ENCODE measurements at regions of chr21 and their contacts with region 1.

Region 1: GRCh38 chr21:32826329-32827167 is 55.0 kb upstream of the PAXBP1 start:
- DNase-seq: peak in 1 of 2 donors; percentile 85
- H3K4me3 ChIP-seq: no peak overlapping the region
- H3K27ac ChIP-seq: no peak overlapping the region
- H3K4me1 ChIP-seq: no peaks in the 10 kb centered on the region
- H3K27me3 ChIP-seq: peaks cover 0 to 3% (median 0%) of the 10 kb centered on the region in 3 donors
- CTCF ChIP-seq: peak in 5 of 7 experiments; percentile 33 to 54 (median 48)
- EP300 ChIP-seq: no peak
- POLR2A ChIP-seq: no peak

Region 2: GRCh38 chr21:32403201-32403777 is 423.3 kb before region 1 on chr21:
- intact Hi-C with region 1: no loop called
- DNase-seq: peak; percentile 57 to 87
- H3K4me3 ChIP-seq: no peak overlapping the region
- H3K27ac ChIP-seq: no peak overlapping the region
- H3K4me1 ChIP-seq: peaks cover 0 to 7% (median 0%) of the 10 kb centered on the region in 4 donors
- H3K27me3 ChIP-seq: no peaks in the 10 kb centered on the region
- CTCF ChIP-seq: peak in 5 of 7 experiments; percentile 43 to 69 (median 58)
- EP300 ChIP-seq: no peak
- POLR2A ChIP-seq: no peak

Region 3: GRCh38 chr21:32653311-32653901 is 173.1 kb before region 1 on chr21:
- intact Hi-C with region 1: loop called (anchors 10 kb)
- DNase-seq: peak in 1 of 2 donors; percentile 70
- H3K4me3 ChIP-seq: no peak overlapping the region
- H3K27ac ChIP-seq: no peak overlapping the region
- H3K4me1 ChIP-seq: no peaks in the 10 kb centered on the region
- H3K27me3 ChIP-seq: no peaks in the 10 kb centered on the region
- CTCF ChIP-seq: peak in 5 of 7 experiments; percentile 30 to 61 (median 44)
- EP300 ChIP-seq: no peak
- POLR2A ChIP-seq: no peak

Measured in stomach (tissue), 19 donors.